ENCODE measurements at regions of chr17 and their contacts with region 1.

Region 1: GRCh38 chr17:49548506-49549310 is 27.0 kb upstream of the NXPH3 start:
- DNase-seq: peak; percentile 45
- ATAC-seq: peak; percentile 74
- H3K4me3 ChIP-seq: no peak overlapping the region
- H3K27ac ChIP-seq: no peak overlapping the region
- H3K4me1 ChIP-seq: peaks cover 14% of the 10 kb centered on the region
- H3K27me3 ChIP-seq: peaks cover 9 to 66% of the 10 kb centered on the region in 2 experiments
- CTCF ChIP-seq: peak; percentile 88
- EP300 ChIP-seq: no peak
- POLR2A ChIP-seq: no peak
- RAD21 ChIP-seq: peak; percentile 74

Region 2: DNA sequence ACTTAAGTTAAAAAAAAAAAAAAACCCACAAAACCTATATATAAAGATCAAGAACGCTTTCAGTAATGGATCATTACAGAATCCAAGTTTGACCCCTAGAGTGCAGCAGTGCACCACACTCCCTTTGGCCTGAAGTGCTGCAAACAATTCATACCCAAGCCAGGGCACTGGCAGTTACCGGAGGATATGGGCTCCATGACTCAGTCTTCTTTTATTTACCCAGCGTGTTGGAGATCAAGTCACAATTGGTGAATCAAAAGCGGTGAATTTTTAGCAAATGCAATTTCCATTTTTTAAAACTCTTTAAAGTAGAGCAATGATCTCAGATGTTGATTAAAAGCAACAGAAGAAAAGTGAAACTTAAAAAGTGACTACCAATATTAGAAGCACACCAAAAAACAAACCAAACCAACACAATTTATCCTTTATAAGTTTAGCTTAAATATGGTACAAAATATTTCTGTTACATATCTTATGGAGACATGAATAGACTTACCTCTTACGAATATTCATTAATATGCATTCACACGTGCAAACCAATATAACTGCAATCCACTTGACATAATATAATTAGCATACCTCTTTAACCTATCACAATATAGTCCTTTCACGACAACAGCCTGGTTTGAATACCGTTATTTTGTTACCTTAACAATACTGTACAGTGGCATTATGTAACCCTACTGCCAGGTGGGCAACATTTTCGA is 233.0 kb before region 1 on chr17:
- CTCF ChIA-PET with region 1: no interaction called
- POLR2A ChIA-PET with region 1: no interaction called
- in situ Hi-C with region 1: loop called (anchors 10 kb)
- intact Hi-C with region 1: loop called (anchors 10 kb)
- DNase-seq: peak; percentile 78
- ATAC-seq: peak; percentile 97
- H3K4me3 ChIP-seq: no peak overlapping the region
- H3K27ac ChIP-seq: no peak overlapping the region
- H3K4me1 ChIP-seq: peaks cover 5% of the 10 kb centered on the region; the same call in 1 of the 2 replicates
- H3K27me3 ChIP-seq: no peaks in the 10 kb centered on the region
- CTCF ChIP-seq: peak; percentile 86
- EP300 ChIP-seq: no peak; a peak in 1 of 4 replicates
- POLR2A ChIP-seq: no peak
- RAD21 ChIP-seq: peak; percentile 90

Region 3: DNA sequence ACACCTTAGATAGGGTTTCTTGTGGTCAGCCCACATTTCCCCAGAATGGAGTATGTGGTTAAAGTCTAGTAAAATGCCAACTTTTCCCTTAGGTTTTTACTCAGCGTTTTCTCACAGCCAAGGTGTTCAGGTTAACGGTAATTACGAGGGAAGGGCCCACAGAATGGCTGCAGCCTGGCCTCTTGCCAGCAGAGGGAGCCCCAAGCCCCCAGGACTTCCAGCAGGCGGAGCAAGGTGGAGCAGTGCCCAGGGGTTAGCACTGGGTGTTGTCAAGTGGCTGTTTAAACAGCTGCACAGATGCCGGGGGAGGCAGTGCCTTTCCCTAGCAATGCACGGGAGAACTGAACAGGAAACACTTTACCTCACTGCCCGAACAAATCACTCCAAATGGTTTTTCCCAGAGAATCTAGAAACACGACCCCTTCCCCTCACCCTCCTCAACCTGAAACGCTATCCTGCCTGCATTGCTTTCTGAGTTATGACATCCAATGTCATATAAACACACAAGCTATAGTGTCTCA is 140.7 kb before region 1 on chr17:
- CTCF ChIA-PET with region 1: interaction called, 15 read pairs
- POLR2A ChIA-PET with region 1: no interaction called
- in situ Hi-C with region 1: loop called (anchors 5 kb)
- intact Hi-C with region 1: loop called (anchors 2 kb)
- DNase-seq: peak; percentile 87
- ATAC-seq: peak; percentile 98
- H3K4me3 ChIP-seq: no peak overlapping the region
- H3K27ac ChIP-seq: no peak overlapping the region
- H3K4me1 ChIP-seq: peaks cover 19% of the 10 kb centered on the region
- H3K27me3 ChIP-seq: no peaks in the 10 kb centered on the region
- CTCF ChIP-seq: peak; percentile 99
- EP300 ChIP-seq: peak in 1 of 2 experiments; percentile 27; a peak in 1 of 4 replicates
- POLR2A ChIP-seq: no peak
- RAD21 ChIP-seq: peak; percentile 98

Region 4: DNA sequence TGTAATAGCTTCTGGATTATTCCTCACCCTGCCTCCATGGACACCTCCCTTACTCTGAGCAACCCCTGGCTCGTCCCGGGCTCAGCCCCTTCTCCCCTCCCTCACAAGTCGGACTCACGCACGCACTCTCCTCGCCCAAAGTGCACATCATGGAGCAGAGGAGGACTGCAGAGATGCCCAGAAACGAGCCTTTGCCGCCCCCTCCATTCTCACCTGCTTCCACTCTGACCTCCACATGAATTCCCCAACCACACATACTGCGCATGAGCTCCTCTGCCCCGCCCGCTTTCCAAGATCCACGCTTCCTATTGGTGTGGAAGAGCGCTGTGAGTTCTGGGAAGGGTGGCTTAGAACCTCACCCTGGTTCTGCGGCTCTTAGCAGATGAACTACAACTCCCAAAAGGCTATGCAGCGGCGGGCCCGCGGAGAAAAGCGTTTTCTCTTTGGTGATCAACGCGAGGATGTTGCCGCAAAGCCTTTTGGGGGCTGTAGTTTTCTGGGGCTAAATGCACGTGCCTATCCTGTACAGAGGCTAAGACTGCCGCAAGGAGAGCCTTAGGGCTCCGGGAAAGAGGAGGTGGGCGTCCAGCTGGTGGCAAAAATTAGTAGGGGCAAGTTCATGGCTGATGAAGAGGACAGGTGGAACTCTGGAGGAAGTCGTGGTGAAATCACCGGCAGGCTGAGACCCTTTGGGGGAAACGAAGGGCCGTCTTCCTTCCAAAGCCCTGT is 133.9 kb before region 1 on chr17 and contains the start of gene PHB1:
- CTCF ChIA-PET with region 1: no interaction called
- POLR2A ChIA-PET with region 1: interaction called, 3 read pairs
- in situ Hi-C with region 1: loop called (anchors 5 kb)
- intact Hi-C with region 1: loop called (anchors 2 kb)
- DNase-seq: peak; percentile 99
- ATAC-seq: peak; percentile 99
- H3K4me3 ChIP-seq: peak within 1 kb of the TSS; percentile 87 to 94 (median 92)
- H3K27ac ChIP-seq: peak within 1 kb of the TSS; percentile 63
- H3K4me1 ChIP-seq: peaks cover 55% of the 10 kb centered on the region
- H3K27me3 ChIP-seq: no peaks in the 10 kb centered on the region; a peak in 1 of 5 replicates
- CTCF ChIP-seq: no peak
- EP300 ChIP-seq: peak in 1 of 2 experiments; percentile 49; a peak in 1 of 4 replicates
- POLR2A ChIP-seq: peak; percentile 69 to 95
- RAD21 ChIP-seq: no peak
- total RNA-seq, gene PHB1: 515 and 623 TPM in 2 replicates

Region 5: GRCh38 chr17:49434821-49435670 is 113.7 kb before region 1 on chr17:
- CTCF ChIA-PET with region 1: interaction called, 9 read pairs
- POLR2A ChIA-PET with region 1: no interaction called
- in situ Hi-C with region 1: loop called (anchors 5 kb)
- intact Hi-C with region 1: loop called (anchors 1 kb)
- DNase-seq: peak; percentile 74
- ATAC-seq: peak; percentile 80
- H3K4me3 ChIP-seq: no peak overlapping the region
- H3K27ac ChIP-seq: no peak overlapping the region
- H3K4me1 ChIP-seq: peaks cover 44% of the 10 kb centered on the region
- H3K27me3 ChIP-seq: peaks cover 4 to 57% of the 10 kb centered on the region in 2 experiments
- CTCF ChIP-seq: peak; percentile 83
- EP300 ChIP-seq: no peak
- POLR2A ChIP-seq: no peak
- RAD21 ChIP-seq: peak; percentile 63; the same call in 1 of the 2 replicates

Region 6: DNA sequence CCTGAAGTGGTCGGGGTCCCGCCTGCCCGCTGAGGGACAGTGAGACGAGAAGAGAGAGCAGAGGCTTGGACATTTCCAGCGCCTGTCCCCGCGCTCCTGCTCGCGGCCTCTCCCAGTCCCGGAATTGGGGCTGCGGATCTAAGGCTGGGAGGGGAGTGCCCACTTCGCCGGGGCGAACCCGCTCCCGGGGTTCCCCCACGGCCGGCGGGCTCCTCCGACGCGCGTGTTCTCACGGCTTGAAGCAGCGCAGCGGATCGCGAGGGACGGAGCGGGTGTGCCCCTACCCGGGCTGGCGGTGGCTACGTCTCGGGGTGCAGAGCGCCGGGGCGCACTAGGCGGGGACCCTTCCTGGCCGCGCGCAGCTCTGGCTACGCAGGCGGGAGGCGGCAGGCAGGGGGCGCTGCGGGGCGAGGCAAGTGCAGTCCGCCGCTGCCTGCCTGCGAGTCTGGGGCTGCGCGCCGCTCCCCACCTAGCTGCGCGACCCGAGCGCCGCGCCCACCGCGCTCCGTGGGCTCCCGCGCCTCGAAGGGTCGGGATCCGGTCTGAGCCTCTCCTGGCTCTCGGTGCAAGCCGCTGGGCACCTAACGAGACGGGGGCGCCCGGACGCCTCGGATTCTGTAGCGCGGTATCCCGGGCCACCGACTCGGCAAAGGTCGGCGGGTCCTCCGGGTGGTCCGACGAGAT is 52.4 kb before region 1 on chr17:
- CTCF ChIA-PET with region 1: interaction called, 4 read pairs
- POLR2A ChIA-PET with region 1: no interaction called
- in situ Hi-C with region 1: loop called (anchors 5 kb)
- intact Hi-C with region 1: loop called (anchors 2 kb)
- DNase-seq: no peak
- ATAC-seq: peak; percentile 92
- H3K4me3 ChIP-seq: peak overlapping the region; percentile 44 to 70 (median 55); a peak in 5 of 6 replicates
- H3K27ac ChIP-seq: no peak overlapping the region
- H3K4me1 ChIP-seq: peaks cover 25% of the 10 kb centered on the region
- H3K27me3 ChIP-seq: peaks cover 22 to 83% of the 10 kb centered on the region in 2 experiments
- CTCF ChIP-seq: peak; percentile 89
- EP300 ChIP-seq: no peak
- POLR2A ChIP-seq: no peak
- RAD21 ChIP-seq: peak; percentile 89

Region 7: DNA sequence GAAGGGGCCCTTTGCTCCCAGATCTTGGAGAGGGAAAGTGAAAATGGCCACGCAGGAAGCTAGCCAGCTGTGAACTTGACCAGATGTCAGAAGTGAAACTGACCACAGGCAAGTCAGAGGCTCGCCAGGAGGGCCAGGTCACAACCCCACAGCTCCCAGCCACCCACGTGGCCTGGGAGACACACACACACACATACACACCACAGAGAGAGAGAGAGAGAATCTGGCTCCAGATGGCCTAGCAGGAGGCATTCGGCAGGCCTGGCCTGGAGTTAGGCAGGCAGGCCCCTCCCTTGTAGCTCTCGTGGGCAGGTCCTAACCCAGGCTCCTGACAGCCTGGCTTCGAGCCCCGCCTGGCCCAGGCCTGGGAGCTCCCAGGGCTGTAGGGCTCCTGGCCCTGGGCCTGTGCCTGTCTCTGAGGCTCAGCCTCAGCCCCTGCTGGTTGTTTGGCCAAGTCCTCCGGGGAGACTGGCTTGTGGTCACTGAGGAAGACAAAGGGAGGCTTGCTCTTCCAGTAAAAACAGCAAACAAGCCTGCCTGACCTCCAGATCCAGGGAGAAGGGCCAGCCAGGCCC is 33.4 kb before region 1 on chr17:
- CTCF ChIA-PET with region 1: no interaction called
- POLR2A ChIA-PET with region 1: no interaction called
- in situ Hi-C with region 1: no loop called
- intact Hi-C with region 1: loop called (anchors 2 kb)
- DNase-seq: peak; percentile 79
- ATAC-seq: peak; percentile 95
- H3K4me3 ChIP-seq: peak overlapping the region; percentile 46 to 72 (median 52)
- H3K27ac ChIP-seq: no peak overlapping the region
- H3K4me1 ChIP-seq: peaks cover 32% of the 10 kb centered on the region
- H3K27me3 ChIP-seq: peaks cover 2 to 28% of the 10 kb centered on the region in 2 experiments; a peak in 4 of 5 replicates
- CTCF ChIP-seq: peak; percentile 34; the same call in 1 of the 2 replicates
- EP300 ChIP-seq: no peak
- POLR2A ChIP-seq: peak in 1 of 2 experiments; percentile 72; a peak in 3 of 4 replicates
- RAD21 ChIP-seq: peak; percentile 43; the same call in 1 of the 2 replicates